Activated naive CD4-positive, alpha-beta T cell treated with anti-CD3 and anti-CD28 coated beads, Interleukin-2, amount 10 ng/mL, durations not matched to agents 7 days and 5 days (primary cell): ENCODE measurements at regions of chr2 and their contacts with region 1.

Region 1: DNA sequence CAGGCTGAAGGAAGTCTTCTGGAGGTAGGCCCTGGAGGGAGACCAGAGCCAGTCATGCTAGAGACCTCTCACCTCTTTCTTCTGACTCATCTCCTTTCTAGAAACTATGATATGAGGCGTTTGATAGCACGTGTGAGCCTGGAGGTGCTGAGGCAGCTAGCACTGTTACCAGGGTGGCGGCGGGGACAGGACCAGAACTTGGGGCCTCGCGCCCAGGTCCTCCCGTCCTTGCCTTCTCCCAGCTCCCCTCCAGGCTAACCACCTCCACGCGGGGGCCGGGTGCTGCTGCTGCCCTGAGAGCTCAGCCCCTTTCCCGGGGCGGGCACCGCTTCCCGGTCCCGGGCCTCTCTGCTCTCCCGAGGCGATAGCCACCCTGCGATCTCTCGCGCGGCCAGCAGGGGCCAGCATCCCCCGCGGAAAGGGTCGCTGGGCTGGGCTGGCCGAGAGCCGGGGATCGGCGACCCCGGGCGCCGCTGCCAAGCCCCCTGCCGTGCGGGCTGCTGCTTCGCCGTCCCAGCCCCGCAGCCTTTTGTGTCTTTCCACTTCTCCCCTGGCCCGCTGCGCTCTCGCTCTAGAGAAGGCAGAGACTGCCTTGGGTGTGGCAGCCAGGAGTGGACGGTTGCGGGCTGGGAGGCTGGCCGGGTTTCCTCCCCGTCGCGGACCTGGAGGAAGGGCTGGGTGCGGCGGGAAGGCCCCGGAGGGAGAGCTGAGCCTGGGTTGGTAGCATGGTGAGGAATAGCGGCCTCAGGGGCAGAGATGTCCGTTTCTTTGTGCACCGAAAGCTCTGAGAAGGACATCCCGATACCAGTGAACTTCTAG is 49.1 kb downstream of the TMEM17 start:
- DNase-seq: peak; percentile 69
- H3K4me3 Mint-ChIP-seq: no peak overlapping the region
- H3K27ac Mint-ChIP-seq: no peak overlapping the region
- H3K4me1 Mint-ChIP-seq: no peaks in the 10 kb centered on the region
- H3K27me3 Mint-ChIP-seq: peaks cover 26% of the 10 kb centered on the region

Region 2: GRCh38 chr2:62467475-62468321 is 10.8 kb after region 1 on chr2:
- CTCF ChIA-PET with region 1: interaction called, 10 read pairs
- DNase-seq: no peak
- H3K4me3 Mint-ChIP-seq: no peak overlapping the region
- H3K27ac Mint-ChIP-seq: no peak overlapping the region
- H3K4me1 Mint-ChIP-seq: no peaks in the 10 kb centered on the region
- H3K27me3 Mint-ChIP-seq: peaks cover 24% of the 10 kb centered on the region

Region 3: DNA sequence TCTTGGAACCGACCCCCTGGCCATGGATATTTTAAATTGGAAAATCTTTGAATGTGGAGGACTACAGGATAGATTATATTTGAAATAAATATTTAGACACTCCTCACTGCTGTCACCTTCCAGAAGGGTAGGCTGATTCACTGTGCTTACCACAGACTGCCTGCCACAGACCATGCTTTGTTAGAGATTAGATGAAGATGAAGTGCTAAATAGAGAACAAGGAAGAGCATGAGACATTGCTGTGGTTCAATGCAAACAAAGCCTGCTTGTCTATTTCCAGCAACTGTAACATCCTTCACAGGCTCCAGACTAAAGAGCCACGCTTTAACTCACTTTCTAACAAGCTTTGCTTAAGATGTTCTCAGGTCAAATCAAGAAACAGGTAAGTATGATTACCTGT is 130.1 kb after region 1 on chr2:
- CTCF ChIA-PET with region 1: no interaction called
- DNase-seq: no peak
- H3K4me3 Mint-ChIP-seq: no peak overlapping the region
- H3K27ac Mint-ChIP-seq: no peak overlapping the region
- H3K4me1 Mint-ChIP-seq: no peaks in the 10 kb centered on the region
- H3K27me3 Mint-ChIP-seq: no peaks in the 10 kb centered on the region

Region 4: DNA sequence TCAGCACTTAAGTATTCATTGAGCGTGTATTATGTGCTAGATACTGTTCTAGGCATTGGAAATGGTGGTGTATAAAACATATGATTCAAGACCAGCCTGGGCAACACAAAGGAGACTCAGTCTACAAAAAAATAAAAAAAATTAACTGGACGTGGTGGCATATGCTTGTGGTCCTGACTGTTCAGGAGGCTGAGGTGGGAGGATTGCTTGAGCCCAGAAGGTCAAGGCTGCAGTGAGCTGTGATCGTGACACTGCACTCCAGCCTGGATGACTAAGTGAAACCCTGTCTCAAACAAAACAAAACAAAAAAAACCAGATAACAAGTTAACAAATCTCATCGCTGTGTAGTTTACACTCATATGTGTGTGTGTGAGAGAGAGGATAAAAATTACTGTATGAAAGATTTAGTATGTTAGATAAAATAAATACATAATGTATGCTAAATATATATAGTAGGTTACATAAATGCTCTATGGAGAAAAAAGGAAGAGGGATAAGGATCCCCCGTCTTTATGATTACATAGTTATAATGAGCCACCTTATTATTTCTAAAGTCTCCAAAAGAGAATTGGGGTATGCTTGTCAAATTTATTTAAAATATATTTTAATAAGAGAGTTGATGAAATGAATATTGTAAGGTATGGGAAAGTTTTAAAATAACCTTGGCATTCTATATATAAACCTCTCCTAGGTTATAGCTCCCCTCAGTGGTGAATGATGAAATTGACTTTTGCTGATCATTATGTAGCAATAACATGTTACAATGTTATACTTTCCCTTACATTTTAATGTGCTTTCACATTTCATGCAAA is 317.8 kb after region 1 on chr2:
- CTCF ChIA-PET with region 1: interaction called, 47 read pairs
- DNase-seq: no peak
- H3K4me3 Mint-ChIP-seq: no peak overlapping the region
- H3K27ac Mint-ChIP-seq: no peak overlapping the region
- H3K4me1 Mint-ChIP-seq: peaks cover 4% of the 10 kb centered on the region
- H3K27me3 Mint-ChIP-seq: no peaks in the 10 kb centered on the region